ENCODE measurements at regions of chr19 and their contacts with region 1.

Region 1: DNA sequence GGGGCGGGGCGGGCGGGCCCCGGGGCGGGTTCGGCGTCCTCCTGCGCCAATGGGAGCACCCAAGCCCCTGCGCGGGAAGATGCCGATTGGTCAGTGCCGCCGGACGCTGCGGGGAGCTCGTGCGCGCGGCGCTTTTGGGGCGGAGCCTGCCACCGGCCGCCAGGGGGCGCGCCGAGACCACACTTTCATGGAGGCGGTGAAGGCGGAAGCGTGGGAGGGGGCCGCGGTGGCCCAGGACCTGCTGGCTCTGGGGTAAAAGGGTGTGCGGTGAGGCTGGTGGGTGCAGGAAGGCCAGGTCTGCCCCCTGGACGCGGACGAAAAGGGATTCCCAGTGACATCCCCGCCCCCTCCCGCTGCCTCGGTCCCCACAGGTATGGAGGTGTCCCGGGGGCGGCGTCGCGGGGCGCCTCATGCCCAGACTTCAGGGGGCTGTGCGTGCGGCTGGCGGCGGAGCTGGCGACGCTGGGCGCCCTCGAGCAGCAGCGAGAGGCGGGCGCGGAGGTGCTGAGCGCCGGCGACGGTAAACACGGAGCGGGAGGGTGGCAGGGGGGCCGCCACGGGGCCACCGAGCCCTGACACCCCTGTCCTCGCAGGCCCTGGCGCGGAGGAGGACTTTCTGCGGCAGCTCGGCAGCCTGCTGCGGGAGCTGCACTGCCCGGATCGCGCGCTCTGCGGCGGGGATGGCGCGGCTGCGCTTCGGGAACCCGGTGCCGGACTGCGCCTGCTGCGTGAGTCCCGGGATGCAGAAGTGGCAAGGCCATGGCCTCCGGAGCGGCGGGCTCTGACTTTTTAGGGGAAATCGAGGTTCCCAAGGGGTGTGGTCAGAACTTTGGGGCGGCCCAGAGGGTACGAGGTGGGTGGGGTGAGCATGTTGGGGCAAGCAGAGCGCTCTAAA is at the start of gene FAM98C:
- DNase-seq: peak; percentile 97 to 99 (median 99)
- ATAC-seq: peak; percentile 98
- H3K4me3 ChIP-seq: peak within 1 kb of the TSS; percentile 79
- H3K4me3 Mint-ChIP-seq: peak within 1 kb of the TSS; percentile 79 to 98 (median 90)
- H3K27ac ChIP-seq: peak within 1 kb of the TSS; percentile 83
- H3K27ac Mint-ChIP-seq: peak within 1 kb of the TSS; percentile 79 to 97 (median 95)
- H3K4me1 ChIP-seq: peaks cover 5 to 8% of the 10 kb centered on the region in 2 donors
- H3K4me1 Mint-ChIP-seq: peaks cover 7 to 21% (median 19%) of the 10 kb centered on the region in 7 donors
- H3K27me3 ChIP-seq: no peaks in the 10 kb centered on the region
- H3K27me3 Mint-ChIP-seq: peaks cover 0 to 10% (median 0%) of the 10 kb centered on the region in 5 donors
- total RNA-seq, gene FAM98C: 33.8 to 56.5 (median 44.7) TPM

Region 2: GRCh38 chr19:37602239-37602638 is 801.0 kb before region 1 on chr19:
- CTCF ChIA-PET with region 1: no interaction called
- POLR2A ChIA-PET with region 1: no interaction called
- intact Hi-C with region 1: no loop called
- DNase-seq: no peak
- ATAC-seq: no peak
- H3K4me3 ChIP-seq: no peak overlapping the region
- H3K4me3 Mint-ChIP-seq: no peak overlapping the region
- H3K27ac ChIP-seq: no peak overlapping the region
- H3K27ac Mint-ChIP-seq: no peak overlapping the region
- H3K4me1 ChIP-seq: no peaks in the 10 kb centered on the region
- H3K4me1 Mint-ChIP-seq: peaks cover 0 to 9% (median under 1%) of the 10 kb centered on the region in 7 donors
- H3K27me3 ChIP-seq: no peaks in the 10 kb centered on the region
- H3K27me3 Mint-ChIP-seq: no peaks in the 10 kb centered on the region

Region 3: DNA sequence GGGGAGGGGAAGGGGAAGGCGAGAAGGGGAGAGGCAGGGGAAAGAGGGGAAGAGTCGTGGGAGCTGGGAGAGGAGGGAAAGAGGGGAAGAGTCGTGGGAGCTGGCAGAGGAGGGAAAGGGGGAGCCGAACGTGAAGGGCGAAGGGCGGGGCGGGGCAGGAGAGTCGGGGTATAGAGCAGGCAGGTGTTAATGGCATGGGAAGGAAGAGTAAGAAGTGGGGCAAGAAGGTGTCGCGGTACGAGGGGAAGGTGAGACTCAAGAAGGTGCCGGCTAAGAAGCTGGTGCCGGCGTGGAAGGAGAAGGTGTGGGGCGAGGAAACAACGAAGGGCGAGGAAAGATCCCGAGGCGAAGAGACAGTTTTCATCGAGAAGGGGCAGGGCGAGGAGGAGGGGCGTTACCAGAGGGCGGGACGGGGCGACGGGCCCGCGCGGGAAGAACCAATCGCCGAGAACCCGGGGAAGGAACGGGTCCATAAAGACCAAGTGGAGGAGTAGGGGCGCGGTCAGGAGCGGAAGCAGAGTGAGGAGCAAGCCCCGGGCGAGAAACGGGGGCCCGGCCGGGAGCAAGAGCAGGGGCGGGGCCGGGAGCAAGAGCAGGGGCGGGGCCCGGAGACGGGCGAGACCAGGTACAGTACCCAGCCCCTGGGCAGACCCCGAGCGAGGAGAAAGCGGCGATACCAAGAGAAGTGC is 67.1 kb before region 1 on chr19:
- CTCF ChIA-PET with region 1: interaction called, 3 read pairs
- POLR2A ChIA-PET with region 1: interaction called, 5 read pairs
- intact Hi-C with region 1: loop called in 1 of 2 experiments (anchors 1 kb)
- DNase-seq: peak; percentile 86 to 94 (median 93)
- ATAC-seq: peak; percentile 77
- H3K4me3 ChIP-seq: peak overlapping the region; percentile 92
- H3K4me3 Mint-ChIP-seq: peak overlapping the region; percentile 92 to 100 (median 96)
- H3K27ac ChIP-seq: peak overlapping the region; percentile 86
- H3K27ac Mint-ChIP-seq: peak overlapping the region; percentile 91 to 100 (median 97)
- H3K4me1 ChIP-seq: peaks cover 3 to 5% of the 10 kb centered on the region in 2 donors
- H3K4me1 Mint-ChIP-seq: peaks cover 16 to 28% (median 17%) of the 10 kb centered on the region in 7 donors
- H3K27me3 ChIP-seq: no peaks in the 10 kb centered on the region
- H3K27me3 Mint-ChIP-seq: no peaks in the 10 kb centered on the region

Region 4: GRCh38 chr19:38351865-38352395 is 51.3 kb before region 1 on chr19:
- CTCF ChIA-PET with region 1: no interaction called
- POLR2A ChIA-PET with region 1: no interaction called
- intact Hi-C with region 1: no loop called
- DNase-seq: no peak
- ATAC-seq: no peak
- H3K4me3 ChIP-seq: no peak overlapping the region
- H3K4me3 Mint-ChIP-seq: no peak overlapping the region
- H3K27ac ChIP-seq: no peak overlapping the region
- H3K27ac Mint-ChIP-seq: no peak overlapping the region
- H3K4me1 ChIP-seq: no peaks in the 10 kb centered on the region
- H3K4me1 Mint-ChIP-seq: peaks cover 0 to 3% (median 0%) of the 10 kb centered on the region in 7 donors
- H3K27me3 ChIP-seq: no peaks in the 10 kb centered on the region
- H3K27me3 Mint-ChIP-seq: peaks cover 0 to 9% (median 0%) of the 10 kb centered on the region in 5 donors

Region 5: GRCh38 chr19:38417544-38418506 is 14.6 kb after region 1 on chr19:
- CTCF ChIA-PET with region 1: interaction called, 3 read pairs
- POLR2A ChIA-PET with region 1: interaction called, 5 read pairs
- intact Hi-C with region 1: loop called in 1 of 2 experiments (anchors 1 kb)
- DNase-seq: peak in 8 of 9 donors; percentile 18 to 66 (median 26)
- ATAC-seq: peak; percentile 94
- H3K4me3 ChIP-seq: peak overlapping the region; percentile 55
- H3K4me3 Mint-ChIP-seq: peak overlapping the region; percentile 83 to 96 (median 86)
- H3K27ac ChIP-seq: peak overlapping the region; percentile 30
- H3K27ac Mint-ChIP-seq: peak overlapping the region; percentile 57 to 82 (median 71)
- H3K4me1 ChIP-seq: peaks cover 12 to 13% of the 10 kb centered on the region in 2 donors
- H3K4me1 Mint-ChIP-seq: peaks cover 20 to 23% (median 22%) of the 10 kb centered on the region in 7 donors
- H3K27me3 ChIP-seq: no peaks in the 10 kb centered on the region
- H3K27me3 Mint-ChIP-seq: peaks cover 0 to 2% (median 0%) of the 10 kb centered on the region in 5 donors

Region 6: GRCh38 chr19:38544034-38544958 is 141.1 kb after region 1 on chr19:
- CTCF ChIA-PET with region 1: no interaction called
- POLR2A ChIA-PET with region 1: no interaction called
- intact Hi-C with region 1: loop called (anchors 1 kb)
- DNase-seq: peak in 8 of 9 donors; percentile 36 to 68 (median 53)
- ATAC-seq: peak; percentile 88
- H3K4me3 ChIP-seq: no peak overlapping the region
- H3K4me3 Mint-ChIP-seq: peak overlapping the region in 7 of 10 donors; percentile 0 to 65 (median 45)
- H3K27ac ChIP-seq: no peak overlapping the region
- H3K27ac Mint-ChIP-seq: peak overlapping the region in 7 of 9 donors; percentile 1 to 85 (median 13)
- H3K4me1 ChIP-seq: peaks cover 4 to 14% of the 10 kb centered on the region in 2 donors
- H3K4me1 Mint-ChIP-seq: peaks cover 9 to 34% (median 19%) of the 10 kb centered on the region in 7 donors
- H3K27me3 ChIP-seq: no peaks in the 10 kb centered on the region
- H3K27me3 Mint-ChIP-seq: no peaks in the 10 kb centered on the region

Region 7: DNA sequence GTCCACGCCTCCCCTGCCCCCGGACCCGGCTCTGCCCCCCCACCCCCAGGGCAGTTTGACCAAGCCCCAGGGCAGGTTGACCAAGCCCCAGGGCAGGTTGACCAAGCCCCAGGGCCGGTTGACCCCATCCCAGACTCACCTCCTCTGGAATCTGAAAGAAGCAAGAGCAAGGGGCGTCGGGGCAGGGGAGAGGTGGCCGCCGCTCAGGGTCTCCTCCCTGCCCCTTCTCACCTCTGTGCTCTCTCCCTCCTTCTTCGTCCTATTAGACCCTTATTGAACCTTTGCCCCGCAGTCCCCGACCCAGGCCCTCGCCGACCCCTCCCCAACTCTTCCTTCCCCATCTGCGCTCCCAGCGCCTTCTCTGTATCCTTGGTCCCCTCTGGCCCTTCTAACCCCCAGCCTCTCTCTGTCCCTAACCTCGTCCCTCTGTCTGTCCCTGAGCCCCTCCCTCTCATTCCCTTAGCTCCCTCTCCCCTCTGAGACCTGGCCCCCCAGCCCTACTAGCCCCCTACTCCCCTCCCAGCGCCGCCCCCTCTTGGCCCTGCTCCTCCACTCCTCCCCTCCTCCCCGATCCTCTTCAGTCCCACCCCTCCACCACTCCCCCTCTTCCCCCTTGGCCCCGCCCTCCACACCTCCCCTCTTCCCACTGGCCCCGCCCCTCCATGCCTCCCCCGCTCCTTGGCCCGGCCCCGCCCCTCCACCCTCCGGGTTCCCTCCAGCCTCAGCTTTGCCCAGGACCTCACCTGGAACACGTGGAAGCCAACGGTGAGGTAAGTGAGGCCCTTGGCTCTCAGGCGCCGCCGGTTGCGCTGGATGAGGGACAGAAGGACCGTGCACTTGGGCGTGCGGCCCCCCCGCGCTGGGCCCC is 333.4 kb after region 1 on chr19:
- CTCF ChIA-PET with region 1: no interaction called
- POLR2A ChIA-PET with region 1: no interaction called
- intact Hi-C with region 1: loop called in 1 of 2 experiments (anchors 2 kb)
- DNase-seq: peak in 6 of 9 donors; percentile 31 to 69 (median 41)
- ATAC-seq: peak; percentile 63
- H3K4me3 ChIP-seq: peak overlapping the region; percentile 24
- H3K4me3 Mint-ChIP-seq: peak overlapping the region; percentile 35 to 83 (median 62)
- H3K27ac ChIP-seq: no peak overlapping the region
- H3K27ac Mint-ChIP-seq: peak overlapping the region in 5 of 9 donors; percentile 13 to 76 (median 36)
- H3K4me1 ChIP-seq: peaks cover 15 to 27% of the 10 kb centered on the region in 2 donors
- H3K4me1 Mint-ChIP-seq: peaks cover 7 to 47% (median 29%) of the 10 kb centered on the region in 7 donors
- H3K27me3 ChIP-seq: no peaks in the 10 kb centered on the region
- H3K27me3 Mint-ChIP-seq: peaks cover 0 to 10% (median 0%) of the 10 kb centered on the region in 5 donors

Region 8: DNA sequence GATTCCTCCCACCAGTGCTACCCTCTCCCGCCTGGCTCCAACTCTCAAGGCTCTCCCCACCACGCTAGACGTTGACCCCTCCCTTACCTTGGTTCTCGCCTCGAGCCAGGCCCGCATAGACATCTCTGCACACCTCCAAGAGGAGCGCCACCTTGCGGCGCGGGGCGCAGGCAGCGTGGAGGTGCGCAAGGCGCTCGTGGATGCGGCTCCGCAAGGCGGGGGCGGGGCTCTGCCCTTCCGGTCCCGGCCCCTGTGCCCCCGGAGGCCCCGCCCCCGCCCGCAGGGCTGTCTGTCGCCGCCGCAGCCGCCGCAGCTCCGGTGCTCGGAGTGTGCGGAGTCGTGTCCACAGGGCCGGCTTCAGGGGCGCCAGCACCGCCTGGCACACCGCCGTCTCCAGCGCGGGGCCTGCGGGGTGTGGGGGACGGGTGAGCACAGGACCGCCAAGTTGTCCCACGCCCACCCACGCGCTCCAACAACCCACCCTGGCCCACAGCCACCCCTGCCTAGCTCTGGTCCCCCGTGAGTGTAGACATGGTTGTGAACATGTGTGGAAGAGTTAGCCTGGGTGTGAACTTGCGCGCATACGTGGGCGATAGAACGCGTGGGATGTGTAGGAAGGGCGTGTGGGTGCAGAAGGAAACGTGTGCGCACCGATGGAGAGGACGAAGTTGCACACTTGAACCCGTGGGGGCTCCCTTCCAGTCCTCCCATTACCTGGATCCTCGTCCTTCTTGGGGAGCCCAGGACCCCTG is 466.8 kb after region 1 on chr19:
- CTCF ChIA-PET with region 1: interaction called, 4 read pairs
- POLR2A ChIA-PET with region 1: interaction called, 4 read pairs
- intact Hi-C with region 1: loop called in 1 of 2 experiments (anchors 1 kb)
- DNase-seq: peak; percentile 90 to 96 (median 94)
- ATAC-seq: peak; percentile 98
- H3K4me3 ChIP-seq: peak overlapping the region; percentile 85
- H3K4me3 Mint-ChIP-seq: peak overlapping the region; percentile 84 to 94 (median 91)
- H3K27ac ChIP-seq: peak overlapping the region; percentile 77
- H3K27ac Mint-ChIP-seq: peak overlapping the region; percentile 73 to 97 (median 88)
- H3K4me1 ChIP-seq: peaks cover 26 to 31% of the 10 kb centered on the region in 2 donors
- H3K4me1 Mint-ChIP-seq: peaks cover 26 to 63% (median 41%) of the 10 kb centered on the region in 7 donors
- H3K27me3 ChIP-seq: no peaks in the 10 kb centered on the region
- H3K27me3 Mint-ChIP-seq: no peaks in the 10 kb centered on the region

Region 9: GRCh38 chr19:39412100-39412866 is 1009.1 kb after region 1 on chr19 and contains the start of gene PLEKHG2:
- CTCF ChIA-PET with region 1: no interaction called
- POLR2A ChIA-PET with region 1: no interaction called
- intact Hi-C with region 1: loop called in 1 of 2 experiments (anchors 5 kb)
- DNase-seq: peak; percentile 95 to 99 (median 99)
- ATAC-seq: peak; percentile 72
- H3K4me3 ChIP-seq: peak within 1 kb of the TSS; percentile 82
- H3K4me3 Mint-ChIP-seq: peak within 1 kb of the TSS; percentile 84 to 99 (median 92)
- H3K27ac ChIP-seq: peak within 1 kb of the TSS; percentile 100
- H3K27ac Mint-ChIP-seq: peak within 1 kb of the TSS; percentile 90 to 100 (median 97)
- H3K4me1 ChIP-seq: peaks cover 24 to 28% of the 10 kb centered on the region in 2 donors
- H3K4me1 Mint-ChIP-seq: peaks cover 24 to 49% (median 35%) of the 10 kb centered on the region in 7 donors
- H3K27me3 ChIP-seq: no peaks in the 10 kb centered on the region
- H3K27me3 Mint-ChIP-seq: peaks cover 0 to 3% (median 0%) of the 10 kb centered on the region in 5 donors
- total RNA-seq, gene PLEKHG2: 16.4 to 205 (median 58.2) TPM

Measured in naive thymus-derived CD4-positive, alpha-beta T cell (primary cell).